CD4-positive, alpha-beta T cell (primary cell): ENCODE measurements at regions of chr11 and their contacts with region 1.

Region 1: DNA sequence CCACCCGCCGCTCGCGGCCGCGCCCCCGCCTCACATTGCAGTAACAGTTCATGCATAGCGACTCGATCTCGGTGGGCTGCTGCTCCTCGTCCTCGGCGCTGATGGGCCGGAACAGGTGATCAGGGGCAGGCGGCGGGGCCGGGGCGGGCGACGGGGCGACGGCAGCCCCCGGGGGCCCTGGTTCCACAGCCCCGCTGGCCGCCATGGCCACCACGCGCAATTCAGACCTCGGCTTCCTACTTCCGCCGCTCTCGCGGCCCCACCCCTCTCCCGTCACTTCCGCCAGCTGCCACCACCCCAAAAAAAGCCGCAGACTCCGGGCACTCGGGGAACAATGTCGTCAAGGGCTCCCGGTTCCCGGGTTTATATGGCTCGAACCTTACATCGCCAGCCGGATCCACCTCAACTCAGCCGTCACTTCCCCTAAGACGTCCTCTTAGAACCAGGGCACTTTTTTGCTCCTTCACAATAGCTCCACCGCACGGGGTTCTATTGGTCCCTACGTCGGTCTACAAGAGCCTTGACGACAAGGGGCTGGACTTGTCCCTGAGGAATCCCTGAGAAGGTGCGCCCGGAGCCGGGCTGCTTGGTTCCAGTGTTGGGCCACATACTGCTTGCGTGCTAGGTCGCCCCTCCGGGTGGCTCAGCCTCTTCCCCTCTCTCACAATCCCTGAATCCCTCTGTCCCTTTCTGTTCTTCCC is at the start of gene ZPR1:
- DNase-seq: peak; percentile 71 to 92 (median 84)
- ATAC-seq: peak; percentile 82
- H3K4me3 ChIP-seq: peak within 1 kb of the TSS; percentile 85
- H3K4me3 Mint-ChIP-seq: peak within 1 kb of the TSS; percentile 94
- H3K27ac ChIP-seq: peak within 1 kb of the TSS; percentile 63 to 79
- H3K27ac Mint-ChIP-seq: peak within 1 kb of the TSS; percentile 96
- H3K4me1 ChIP-seq: peaks cover 46% of the 10 kb centered on the region
- H3K4me1 Mint-ChIP-seq: peaks cover 52% of the 10 kb centered on the region
- H3K27me3 ChIP-seq: no peaks in the 10 kb centered on the region
- H3K27me3 Mint-ChIP-seq: no peaks in the 10 kb centered on the region
- CTCF ChIP-seq: no peak
- total RNA-seq, gene ZPR1: 117 to 118 TPM

Region 2: DNA sequence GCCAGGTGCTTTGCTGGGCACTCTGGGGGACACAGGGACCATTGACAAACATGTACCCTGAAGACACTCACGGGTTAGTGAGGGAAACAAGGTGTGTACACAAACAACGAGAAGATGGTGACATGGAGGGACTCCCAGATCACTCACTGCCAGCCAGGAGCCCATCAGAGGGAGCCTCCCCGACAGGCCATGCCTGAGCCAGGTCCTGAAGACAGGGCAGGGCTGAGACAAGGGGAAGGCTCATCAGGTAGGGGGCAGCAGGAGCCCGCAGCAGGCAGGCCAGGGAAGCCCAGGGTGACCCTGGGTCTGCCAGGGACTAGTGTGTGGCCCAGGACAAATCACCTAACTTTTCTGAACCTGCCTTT is 143.0 kb before region 1 on chr11:
- CTCF ChIA-PET with region 1: no interaction called
- POLR2A ChIA-PET with region 1: no interaction called
- intact Hi-C with region 1: no loop called
- DNase-seq: no peak
- ATAC-seq: no peak
- H3K4me3 ChIP-seq: no peak overlapping the region
- H3K4me3 Mint-ChIP-seq: no peak overlapping the region
- H3K27ac ChIP-seq: no peak overlapping the region
- H3K27ac Mint-ChIP-seq: no peak overlapping the region
- H3K4me1 ChIP-seq: no peaks in the 10 kb centered on the region
- H3K4me1 Mint-ChIP-seq: no peaks in the 10 kb centered on the region
- H3K27me3 ChIP-seq: peaks cover 0 to 4% of the 10 kb centered on the region in 2 experiments
- H3K27me3 Mint-ChIP-seq: no peaks in the 10 kb centered on the region
- CTCF ChIP-seq: no peak

Region 3: GRCh38 chr11:116680349-116681125 is 107.4 kb before region 1 on chr11:
- CTCF ChIA-PET with region 1: no interaction called
- POLR2A ChIA-PET with region 1: no interaction called
- intact Hi-C with region 1: no loop called
- DNase-seq: no peak
- ATAC-seq: no peak
- H3K4me3 ChIP-seq: no peak overlapping the region
- H3K4me3 Mint-ChIP-seq: no peak overlapping the region
- H3K27ac ChIP-seq: no peak overlapping the region
- H3K27ac Mint-ChIP-seq: no peak overlapping the region
- H3K4me1 ChIP-seq: no peaks in the 10 kb centered on the region
- H3K4me1 Mint-ChIP-seq: no peaks in the 10 kb centered on the region
- H3K27me3 ChIP-seq: peaks cover 0 to 7% of the 10 kb centered on the region in 2 experiments
- H3K27me3 Mint-ChIP-seq: peaks cover 21% of the 10 kb centered on the region
- CTCF ChIP-seq: no peak

Region 4: GRCh38 chr11:116772443-116773202 is 15.3 kb before region 1 on chr11 and contains the start of gene BUD13:
- CTCF ChIA-PET with region 1: interaction called, 13 read pairs
- POLR2A ChIA-PET with region 1: interaction called, 64 read pairs
- intact Hi-C with region 1: loop called (anchors 1 to 2 kb)
- DNase-seq: peak; percentile 90 to 96 (median 94)
- ATAC-seq: peak; percentile 92
- H3K4me3 ChIP-seq: peak within 1 kb of the TSS; percentile 92
- H3K4me3 Mint-ChIP-seq: peak within 1 kb of the TSS; percentile 99
- H3K27ac ChIP-seq: peak within 1 kb of the TSS; percentile 87 to 90
- H3K27ac Mint-ChIP-seq: peak within 1 kb of the TSS; percentile 95
- H3K4me1 ChIP-seq: peaks cover 23% of the 10 kb centered on the region
- H3K4me1 Mint-ChIP-seq: peaks cover 45% of the 10 kb centered on the region
- H3K27me3 ChIP-seq: no peaks in the 10 kb centered on the region
- H3K27me3 Mint-ChIP-seq: no peaks in the 10 kb centered on the region
- CTCF ChIP-seq: peak; percentile 16
- total RNA-seq, gene BUD13: 9.2 to 10.1 TPM

Region 5: DNA sequence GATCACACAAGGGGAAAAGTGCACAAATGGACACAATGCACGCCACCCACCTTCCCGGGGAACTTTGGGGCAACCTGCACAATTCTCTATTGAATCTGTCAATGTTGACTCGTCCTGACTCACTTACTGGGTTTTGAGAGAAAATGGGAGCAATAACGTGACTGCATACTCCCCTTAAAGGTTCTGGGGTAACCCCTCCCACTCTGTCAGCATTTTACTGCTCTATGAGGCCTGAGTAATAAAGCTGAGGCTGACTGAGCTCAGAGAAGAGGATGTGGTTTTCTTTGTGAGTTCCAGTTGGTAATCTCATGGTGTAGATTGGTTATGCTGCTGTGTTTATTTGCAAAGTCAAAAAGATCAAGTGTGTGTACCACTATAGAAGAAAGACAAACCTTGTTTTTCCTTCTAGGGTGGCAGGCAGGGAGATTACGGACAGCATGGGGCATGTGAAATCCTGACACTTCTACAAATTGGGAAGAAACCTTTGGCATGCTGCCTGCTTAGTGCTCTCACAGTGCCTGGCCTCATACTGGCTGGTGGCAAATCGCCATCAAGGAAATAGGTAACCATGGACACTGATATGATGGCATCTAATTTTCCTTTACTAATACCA is 65.6 kb after region 1 on chr11:
- CTCF ChIA-PET with region 1: interaction called, 5 read pairs
- POLR2A ChIA-PET with region 1: interaction called, 28 read pairs
- intact Hi-C with region 1: loop called (anchors 5 kb)
- DNase-seq: peak in 12 of 14 experiments; percentile 15 to 93 (median 52)
- ATAC-seq: peak; percentile 95
- H3K4me3 ChIP-seq: peak overlapping the region; percentile 13
- H3K4me3 Mint-ChIP-seq: peak overlapping the region; percentile 18
- H3K27ac ChIP-seq: peak overlapping the region; percentile 69 to 82
- H3K27ac Mint-ChIP-seq: peak overlapping the region; percentile 82
- H3K4me1 ChIP-seq: peaks cover 68% of the 10 kb centered on the region
- H3K4me1 Mint-ChIP-seq: peaks cover 74% of the 10 kb centered on the region
- H3K27me3 ChIP-seq: no peaks in the 10 kb centered on the region
- H3K27me3 Mint-ChIP-seq: no peaks in the 10 kb centered on the region
- CTCF ChIP-seq: no peak

Region 6: DNA sequence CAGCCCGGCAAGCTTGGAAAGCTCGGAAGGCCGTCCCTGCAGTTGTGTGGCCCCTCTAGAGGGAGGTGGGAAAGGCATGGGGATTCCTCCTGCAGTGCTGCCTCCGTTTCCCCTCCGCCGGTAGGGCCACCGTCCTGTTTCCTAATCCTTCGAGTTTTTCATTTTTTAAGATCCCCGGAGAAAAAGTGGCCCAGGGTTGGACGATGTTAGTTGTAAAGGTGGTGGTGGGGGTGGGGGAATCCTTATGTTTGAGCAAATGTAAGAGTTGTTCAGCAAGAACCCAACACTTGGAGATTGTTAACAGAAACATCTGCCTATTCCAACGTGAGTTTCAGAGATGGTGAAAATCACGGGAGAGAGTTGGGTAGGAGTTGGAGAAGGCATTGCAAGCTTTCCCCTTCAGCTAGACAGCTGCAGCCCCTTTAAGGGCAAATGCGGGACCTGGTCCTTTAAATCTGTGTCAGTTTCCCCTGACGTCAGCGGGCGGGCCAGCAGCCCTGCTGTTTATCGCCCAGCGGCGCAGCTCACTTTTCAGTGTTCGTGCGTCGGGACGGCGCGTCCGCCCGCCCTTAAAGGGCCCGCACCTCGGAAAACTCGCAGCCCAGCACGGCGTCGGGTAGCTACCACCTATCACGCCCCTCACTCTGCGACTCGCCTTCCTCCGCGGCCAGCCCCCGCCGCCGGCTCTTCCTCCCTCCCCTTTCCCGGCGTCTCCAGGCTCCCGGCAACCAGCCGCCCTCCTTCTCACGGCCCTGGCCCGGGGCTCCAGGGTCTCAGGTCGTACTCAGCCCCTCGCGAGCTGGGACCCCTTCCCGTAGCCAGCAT is 390.5 kb after region 1 on chr11 and contains the start of gene SIDT2:
- CTCF ChIA-PET with region 1: no interaction called
- POLR2A ChIA-PET with region 1: interaction called, 12 read pairs
- intact Hi-C with region 1: no loop called
- DNase-seq: peak; percentile 77 to 94 (median 86)
- ATAC-seq: peak; percentile 89
- H3K4me3 ChIP-seq: peak within 1 kb of the TSS; percentile 81
- H3K4me3 Mint-ChIP-seq: peak within 1 kb of the TSS; percentile 99
- H3K27ac ChIP-seq: peak within 1 kb of the TSS; percentile 34 to 52
- H3K27ac Mint-ChIP-seq: peak within 1 kb of the TSS; percentile 98
- H3K4me1 ChIP-seq: peaks cover 32% of the 10 kb centered on the region
- H3K4me1 Mint-ChIP-seq: peaks cover 40% of the 10 kb centered on the region
- H3K27me3 ChIP-seq: no peaks in the 10 kb centered on the region
- H3K27me3 Mint-ChIP-seq: no peaks in the 10 kb centered on the region
- CTCF ChIP-seq: no peak
- total RNA-seq, gene SIDT2: 197 to 200 TPM

Region 7: DNA sequence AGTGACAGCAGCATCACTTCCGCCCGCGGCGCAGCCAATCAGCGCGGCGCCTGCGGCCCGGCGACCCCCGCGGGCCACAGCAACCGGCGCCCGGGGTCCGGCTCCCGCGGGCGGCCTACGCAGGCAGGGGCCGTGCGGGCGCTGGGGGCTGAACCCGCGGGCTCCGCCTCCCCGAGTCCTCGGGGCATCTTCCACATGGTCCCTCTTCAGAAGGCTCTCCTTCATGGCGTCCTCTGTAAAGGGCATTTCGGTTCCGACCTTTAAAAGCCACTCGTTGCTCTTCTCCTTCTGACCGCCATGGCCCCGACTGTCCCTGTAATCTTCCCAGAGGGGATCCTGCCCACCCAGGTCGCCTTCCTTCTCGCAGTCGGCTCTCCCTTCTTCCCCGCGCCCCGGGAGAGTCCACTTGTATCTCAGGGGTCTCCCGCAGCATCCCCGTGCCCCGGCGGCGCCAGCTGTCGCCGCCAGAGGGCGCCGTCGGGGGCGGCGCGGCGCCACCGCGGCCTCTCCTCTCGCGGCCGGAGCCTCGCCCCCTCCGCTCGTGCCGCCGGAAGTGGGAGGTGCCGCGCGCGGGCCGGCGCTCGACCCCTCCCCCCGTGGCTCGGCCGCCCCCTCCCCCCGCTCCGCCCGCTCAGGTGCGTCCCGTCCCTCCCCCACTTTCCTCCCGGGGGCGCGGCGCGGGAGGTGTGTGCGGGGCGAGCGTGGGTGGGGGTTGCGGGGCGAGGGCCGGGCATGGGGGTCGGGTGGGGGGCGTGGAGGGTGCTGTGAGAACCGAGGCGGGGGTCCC is 444.3 kb after region 1 on chr11 and contains the start of gene RNF214:
- CTCF ChIA-PET with region 1: interaction called, 9 read pairs
- POLR2A ChIA-PET with region 1: interaction called, 7 read pairs
- intact Hi-C with region 1: loop called (anchors 2 to 5 kb)
- DNase-seq: peak; percentile 51 to 91 (median 71)
- ATAC-seq: peak; percentile 70
- H3K4me3 ChIP-seq: peak within 1 kb of the TSS; percentile 100
- H3K4me3 Mint-ChIP-seq: peak within 1 kb of the TSS; percentile 100
- H3K27ac ChIP-seq: peak within 1 kb of the TSS; percentile 91 to 97
- H3K27ac Mint-ChIP-seq: peak within 1 kb of the TSS; percentile 93
- H3K4me1 ChIP-seq: peaks cover 40% of the 10 kb centered on the region
- H3K4me1 Mint-ChIP-seq: peaks cover 58% of the 10 kb centered on the region
- H3K27me3 ChIP-seq: no peaks in the 10 kb centered on the region
- H3K27me3 Mint-ChIP-seq: no peaks in the 10 kb centered on the region
- CTCF ChIP-seq: peak; percentile 70
- total RNA-seq, gene RNF214: 12.9 to 15.8 TPM